ENCODE measurements at regions of chr15 and their contacts with region 1.

Region 1: GRCh38 chr15:81265944-81266775 is 57.8 kb downstream of the STARD5 start:
- DNase-seq: no peak
- H3K4me3 ChIP-seq: no peak overlapping the region
- H3K27ac ChIP-seq: no peak overlapping the region
- H3K4me1 ChIP-seq: peaks cover 15% of the 10 kb centered on the region
- H3K27me3 ChIP-seq: no peaks in the 10 kb centered on the region
- CTCF ChIP-seq: peak; percentile 64 to 90 (median 75)
- POLR2A ChIP-seq: no peak

Region 2: GRCh38 chr15:81106560-81106959 is 159.6 kb before region 1 on chr15:
- intact Hi-C with region 1: loop called (anchors 5 kb)
- DNase-seq: no peak
- H3K4me3 ChIP-seq: no peak overlapping the region
- H3K27ac ChIP-seq: no peak overlapping the region
- H3K4me1 ChIP-seq: peaks cover 4% of the 10 kb centered on the region
- H3K27me3 ChIP-seq: no peaks in the 10 kb centered on the region
- CTCF ChIP-seq: peak; percentile 59 to 78 (median 70)
- POLR2A ChIP-seq: no peak

Region 3: GRCh38 chr15:81151389-81151788 is 114.8 kb before region 1 on chr15:
- intact Hi-C with region 1: loop called (anchors 2 kb)
- DNase-seq: no peak
- H3K4me3 ChIP-seq: no peak overlapping the region
- H3K27ac ChIP-seq: no peak overlapping the region
- H3K4me1 ChIP-seq: no peaks in the 10 kb centered on the region
- H3K27me3 ChIP-seq: no peaks in the 10 kb centered on the region
- CTCF ChIP-seq: no peak
- POLR2A ChIP-seq: no peak

Region 4: DNA sequence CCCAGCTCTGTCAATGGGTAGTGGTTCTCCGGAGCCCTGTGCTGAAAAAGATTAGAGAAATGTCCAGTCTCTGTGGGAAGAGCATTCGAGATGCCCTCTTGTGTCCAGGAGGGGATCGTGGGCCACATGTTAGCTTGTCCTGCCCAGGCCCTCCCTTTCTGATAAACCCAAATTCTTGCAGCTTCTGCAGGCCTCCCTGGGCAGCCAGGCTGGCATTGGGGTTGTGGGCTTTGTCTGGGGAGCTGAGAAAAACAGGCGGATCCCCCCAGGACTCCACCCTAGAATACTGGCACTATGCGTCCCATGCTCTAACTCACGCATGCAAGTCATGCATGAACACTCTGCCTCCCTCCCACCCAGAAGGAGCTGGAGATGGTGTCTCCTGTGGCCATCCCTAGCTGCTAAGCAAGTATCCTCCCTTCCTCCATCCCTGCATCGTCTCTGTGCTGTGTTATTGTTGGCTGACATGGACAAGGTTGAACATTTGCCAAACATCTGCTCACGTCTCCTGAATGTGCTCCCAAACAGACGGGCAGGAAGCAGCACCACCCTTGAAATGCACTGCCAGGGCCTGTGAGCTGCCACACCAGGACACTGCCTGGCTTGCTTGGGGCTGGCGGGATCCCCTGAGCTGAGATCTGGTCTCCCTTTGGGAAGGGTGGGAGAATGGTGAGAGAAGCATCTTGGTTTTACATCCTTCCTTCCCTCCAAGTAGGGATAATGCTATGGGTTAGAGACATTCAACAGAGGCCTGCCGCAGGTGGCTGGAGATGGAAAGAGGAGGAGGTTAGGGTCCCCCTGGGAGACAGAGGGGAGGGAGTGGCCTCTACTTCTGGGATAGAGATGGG is 105.6 kb before region 1 on chr15:
- intact Hi-C with region 1: loop called (anchors 5 kb)
- DNase-seq: no peak
- H3K4me3 ChIP-seq: no peak overlapping the region
- H3K27ac ChIP-seq: peak overlapping the region; percentile 69
- H3K4me1 ChIP-seq: peaks cover 32% of the 10 kb centered on the region
- H3K27me3 ChIP-seq: no peaks in the 10 kb centered on the region
- CTCF ChIP-seq: no peak
- POLR2A ChIP-seq: no peak

Region 5: GRCh38 chr15:81373775-81374395 is 107.7 kb after region 1 on chr15 and contains the start of gene TMC3:
- intact Hi-C with region 1: no loop called
- DNase-seq: peak in 1 of 2 donors; percentile 80
- H3K4me3 ChIP-seq: no peak within 1 kb of the TSS
- H3K27ac ChIP-seq: no peak within 1 kb of the TSS
- H3K4me1 ChIP-seq: no peaks in the 10 kb centered on the region
- H3K27me3 ChIP-seq: no peaks in the 10 kb centered on the region
- CTCF ChIP-seq: no peak
- POLR2A ChIP-seq: no peak
- total RNA-seq, gene TMC3: 2.7 TPM

Region 6: DNA sequence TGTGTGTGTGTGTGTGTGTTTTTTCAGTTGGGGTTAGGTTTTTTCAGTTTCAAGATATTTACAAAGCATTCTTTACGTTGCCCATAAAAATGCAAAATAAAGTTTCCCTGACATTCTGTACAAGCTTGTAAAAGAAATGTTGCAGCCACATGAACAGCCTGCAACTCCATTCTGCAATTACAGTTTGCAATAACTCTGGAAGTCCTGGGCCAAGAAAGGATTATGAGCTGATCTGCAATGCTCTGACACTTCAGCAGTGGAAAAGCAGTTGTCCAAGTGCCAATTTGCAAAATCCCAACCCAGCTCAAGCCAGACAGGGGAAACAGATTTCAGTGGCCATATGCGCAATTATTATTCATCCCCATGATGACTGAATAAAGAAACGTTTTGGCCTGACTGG is 457.5 kb after region 1 on chr15:
- intact Hi-C with region 1: no loop called
- DNase-seq: no peak
- H3K4me3 ChIP-seq: no peak overlapping the region
- H3K27ac ChIP-seq: no peak overlapping the region
- H3K4me1 ChIP-seq: peaks cover 31% of the 10 kb centered on the region
- H3K27me3 ChIP-seq: no peaks in the 10 kb centered on the region
- CTCF ChIP-seq: no peak
- POLR2A ChIP-seq: no peak